Activated CD4-positive, alpha-beta memory T cell treated with anti-CD3 and anti-CD28 coated beads for 36 hours (primary cell): ENCODE measurements at regions of chr17 and their contacts with region 1.

Region 1: GRCh38 chr17:76515274-76515949 is 14.2 kb upstream of the RHBDF2 start:
- DNase-seq: peak; percentile 91
- H3K4me3 Mint-ChIP-seq: peak overlapping the region; percentile 62
- H3K27ac Mint-ChIP-seq: peak overlapping the region; percentile 95
- H3K4me1 Mint-ChIP-seq: peaks cover 45% of the 10 kb centered on the region
- H3K27me3 Mint-ChIP-seq: no peaks in the 10 kb centered on the region

Region 2: GRCh38 chr17:76182016-76182764 is 333.2 kb before region 1 on chr17:
- CTCF ChIA-PET with region 1: no interaction called
- POLR2A ChIA-PET with region 1: no interaction called
- intact Hi-C with region 1: loop called (anchors 5 kb)
- DNase-seq: peak; percentile 98
- H3K4me3 Mint-ChIP-seq: peak overlapping the region; percentile 62
- H3K27ac Mint-ChIP-seq: peak overlapping the region; percentile 87
- H3K4me1 Mint-ChIP-seq: peaks cover 56% of the 10 kb centered on the region
- H3K27me3 Mint-ChIP-seq: no peaks in the 10 kb centered on the region

Region 3: DNA sequence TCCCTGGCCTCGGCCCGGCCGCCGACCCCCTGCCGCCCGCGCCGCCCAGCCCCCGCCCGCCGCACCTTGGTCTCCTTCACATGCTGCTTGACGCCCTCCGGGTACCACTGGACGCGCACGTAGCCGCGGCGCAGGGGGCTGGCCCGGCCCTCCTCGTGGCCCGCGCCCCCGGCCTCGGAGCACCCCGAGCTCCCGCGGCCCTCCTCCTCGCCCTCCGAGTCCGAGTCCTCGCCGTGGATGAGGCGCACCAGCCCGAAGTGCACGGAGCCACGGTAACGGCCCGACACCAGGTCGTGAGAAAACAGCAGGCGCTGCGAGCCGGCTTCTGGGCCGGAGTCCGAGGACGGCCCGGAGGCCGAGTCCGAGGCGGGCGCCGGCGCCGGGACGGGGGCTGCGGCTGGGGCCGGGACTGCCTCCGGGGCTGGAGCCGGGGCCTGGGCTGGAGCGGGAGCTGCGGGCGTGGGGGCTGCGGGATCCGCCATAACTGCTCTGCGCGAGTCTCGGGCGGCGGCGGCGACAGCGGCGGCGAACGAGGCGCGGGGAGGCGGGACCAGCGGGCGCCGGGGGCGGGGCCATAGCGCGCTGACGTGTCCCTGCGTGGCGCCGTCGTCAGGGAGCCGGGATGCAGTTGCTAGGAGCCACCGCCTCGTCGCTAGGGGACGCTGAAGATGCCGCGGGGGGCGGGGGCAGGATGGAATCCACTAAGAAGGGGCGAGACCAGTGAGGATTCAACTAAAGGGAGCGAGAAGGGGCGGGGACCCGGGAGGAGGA is 62.6 kb before region 1 on chr17 and contains the start of gene UBE2O:
- CTCF ChIA-PET with region 1: interaction called, 3 read pairs
- POLR2A ChIA-PET with region 1: no interaction called
- intact Hi-C with region 1: loop called (anchors 5 kb)
- DNase-seq: peak; percentile 94
- H3K4me3 Mint-ChIP-seq: peak within 1 kb of the TSS; percentile 83
- H3K27ac Mint-ChIP-seq: no peak within 1 kb of the TSS
- H3K4me1 Mint-ChIP-seq: peaks cover 33% of the 10 kb centered on the region
- H3K27me3 Mint-ChIP-seq: no peaks in the 10 kb centered on the region
- total RNA-seq, gene UBE2O: 24.5 to 25.2 TPM

Region 4: DNA sequence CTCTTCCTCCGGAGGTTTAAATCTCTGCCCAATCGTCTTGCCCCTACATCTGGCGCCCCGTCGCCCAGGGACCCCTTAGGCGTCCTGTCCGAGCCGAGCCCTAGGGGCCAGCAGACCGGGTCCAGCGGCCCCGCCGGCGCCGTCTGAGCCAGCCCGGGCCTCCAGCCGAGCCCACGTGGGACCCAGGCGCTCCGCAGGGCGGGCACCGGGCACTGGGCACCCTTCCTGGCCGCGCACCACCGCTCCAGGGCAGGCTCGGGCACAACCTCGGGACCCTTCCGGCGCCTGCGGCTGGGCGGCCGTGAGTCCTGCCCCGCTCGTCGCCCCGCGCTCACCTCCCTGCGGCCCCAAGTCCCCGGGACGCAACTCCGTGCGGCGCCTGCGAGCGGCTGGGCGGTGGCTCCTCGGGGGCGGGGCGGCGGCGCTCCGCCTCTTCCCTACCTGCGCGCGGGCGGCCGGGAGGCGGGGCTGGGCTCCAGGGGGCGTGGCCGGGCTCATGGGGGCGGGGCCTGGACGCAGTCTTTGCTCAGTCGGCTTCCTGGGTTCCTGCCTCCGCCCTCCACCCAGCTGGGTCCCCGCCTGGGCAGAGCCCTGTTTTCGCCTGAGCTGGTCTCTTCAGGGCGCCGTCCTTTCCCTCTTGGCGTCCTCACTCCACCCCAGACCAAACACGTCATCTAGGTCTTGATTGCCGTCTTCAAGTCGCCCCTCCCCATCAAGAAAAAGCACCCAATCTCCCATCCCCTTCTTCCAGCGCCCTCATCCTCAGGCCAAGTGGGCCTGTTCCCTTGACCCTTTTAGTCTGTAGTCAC is 14.2 kb before region 1 on chr17 and contains the start of gene RHBDF2:
- CTCF ChIA-PET with region 1: interaction called, 5 read pairs
- POLR2A ChIA-PET with region 1: interaction called, 7 read pairs
- intact Hi-C with region 1: loop called (anchors 1 kb)
- DNase-seq: peak; percentile 98
- H3K4me3 Mint-ChIP-seq: peak within 1 kb of the TSS; percentile 86
- H3K27ac Mint-ChIP-seq: peak within 1 kb of the TSS; percentile 85
- H3K4me1 Mint-ChIP-seq: peaks cover 45% of the 10 kb centered on the region
- H3K27me3 Mint-ChIP-seq: no peaks in the 10 kb centered on the region
- total RNA-seq, gene RHBDF2: 28.9 to 30.0 TPM

Region 5: DNA sequence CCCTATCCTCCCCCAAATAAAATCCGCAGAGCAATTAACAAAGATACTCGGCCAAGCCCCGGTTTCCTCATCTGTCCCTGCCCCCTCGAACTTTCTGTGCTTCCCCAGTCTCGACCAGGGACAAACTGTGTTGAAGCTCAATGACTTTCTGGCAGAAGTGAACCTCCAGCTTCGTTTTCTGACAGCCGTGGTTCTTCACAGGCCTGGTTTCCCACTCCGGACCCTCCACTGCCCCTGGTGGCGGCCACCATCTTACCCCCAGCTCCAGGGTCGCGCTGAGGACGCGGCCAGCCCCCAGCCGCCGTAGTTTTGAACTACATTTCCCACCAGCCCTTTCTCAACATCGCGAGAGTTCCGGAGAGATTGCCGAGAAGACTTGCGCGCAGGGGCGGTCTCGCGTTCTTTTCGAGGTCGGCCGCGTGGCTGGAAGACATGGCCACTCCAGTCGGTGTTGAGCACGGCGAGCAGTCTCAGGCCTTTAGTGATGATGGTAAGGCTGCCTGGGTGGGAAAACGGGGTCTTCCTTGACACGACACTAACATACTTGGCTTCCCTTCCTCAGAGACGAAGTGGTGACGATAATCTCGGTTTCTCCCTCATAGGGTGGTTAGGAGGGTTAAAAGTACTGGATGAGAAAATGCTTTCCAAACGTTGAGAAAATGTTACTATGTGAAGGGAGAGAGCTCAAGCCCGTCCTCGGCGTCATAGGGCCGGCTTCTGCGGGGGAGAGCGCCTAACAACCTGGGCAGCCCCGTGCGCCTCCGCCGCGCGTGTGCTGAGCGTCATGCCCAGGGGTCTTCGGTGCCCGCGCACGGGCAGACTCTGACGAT is 42.2 kb after region 1 on chr17:
- CTCF ChIA-PET with region 1: interaction called, 5 read pairs
- POLR2A ChIA-PET with region 1: interaction called, 16 read pairs
- intact Hi-C with region 1: loop called (anchors 1 kb)
- DNase-seq: peak; percentile 96
- H3K4me3 Mint-ChIP-seq: peak overlapping the region; percentile 97
- H3K27ac Mint-ChIP-seq: peak overlapping the region; percentile 99
- H3K4me1 Mint-ChIP-seq: peaks cover 48% of the 10 kb centered on the region
- H3K27me3 Mint-ChIP-seq: no peaks in the 10 kb centered on the region

Region 6: DNA sequence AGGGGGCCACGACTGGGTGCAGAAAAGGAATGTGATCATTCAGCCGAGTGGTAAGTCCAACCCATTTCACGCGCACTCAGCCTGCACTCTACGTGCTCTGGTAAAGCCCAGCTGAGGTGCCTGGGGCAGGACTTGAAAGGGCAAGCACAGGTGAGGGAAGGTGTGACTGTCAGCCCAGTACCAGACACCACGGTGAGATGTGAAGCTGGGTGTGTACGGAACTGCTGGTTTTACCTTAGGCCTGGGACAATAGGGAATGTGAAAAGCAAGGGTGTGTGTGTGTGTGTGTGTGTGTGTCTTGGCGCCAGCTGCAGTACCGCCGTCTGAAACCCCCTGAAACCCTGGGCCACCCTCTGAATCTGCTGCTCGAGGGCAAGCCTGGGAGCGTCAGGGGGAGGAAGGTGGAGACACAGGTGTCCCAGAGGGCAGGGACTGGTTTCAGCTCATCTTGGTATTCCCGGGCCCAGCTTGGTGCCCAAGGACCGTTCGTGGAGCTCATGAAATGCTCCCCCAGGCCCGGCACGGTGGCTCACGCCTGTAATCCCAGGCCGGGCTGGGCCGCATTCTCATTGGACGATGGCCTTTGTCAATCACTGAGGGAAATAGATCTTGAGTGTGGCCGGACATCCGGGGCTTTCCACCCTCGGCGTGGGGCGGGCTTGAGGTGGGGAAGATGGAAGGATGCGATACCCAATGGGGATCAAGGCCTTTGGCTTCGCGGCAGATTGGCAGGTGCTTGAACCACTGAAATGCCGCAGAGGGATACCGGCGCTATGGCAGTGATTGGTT is 155.9 kb after region 1 on chr17:
- CTCF ChIA-PET with region 1: no interaction called
- POLR2A ChIA-PET with region 1: no interaction called
- intact Hi-C with region 1: loop called (anchors 2 kb)
- DNase-seq: peak; percentile 100
- H3K4me3 Mint-ChIP-seq: peak overlapping the region; percentile 90
- H3K27ac Mint-ChIP-seq: peak overlapping the region; percentile 93
- H3K4me1 Mint-ChIP-seq: peaks cover 24% of the 10 kb centered on the region
- H3K27me3 Mint-ChIP-seq: no peaks in the 10 kb centered on the region

Region 7: GRCh38 chr17:76737082-76737675 is 221.8 kb after region 1 on chr17 and contains the start of gene SRSF2:
- CTCF ChIA-PET with region 1: no interaction called
- POLR2A ChIA-PET with region 1: no interaction called
- intact Hi-C with region 1: loop called (anchors 1 kb)
- DNase-seq: peak; percentile 99
- H3K4me3 Mint-ChIP-seq: peak within 1 kb of the TSS; percentile 95
- H3K27ac Mint-ChIP-seq: peak within 1 kb of the TSS; percentile 100
- H3K4me1 Mint-ChIP-seq: peaks cover 46% of the 10 kb centered on the region
- H3K27me3 Mint-ChIP-seq: no peaks in the 10 kb centered on the region
- total RNA-seq, gene SRSF2: 299 TPM